ENCODE measurements at regions of chr6 and their contacts with region 1.

Region 1: DNA sequence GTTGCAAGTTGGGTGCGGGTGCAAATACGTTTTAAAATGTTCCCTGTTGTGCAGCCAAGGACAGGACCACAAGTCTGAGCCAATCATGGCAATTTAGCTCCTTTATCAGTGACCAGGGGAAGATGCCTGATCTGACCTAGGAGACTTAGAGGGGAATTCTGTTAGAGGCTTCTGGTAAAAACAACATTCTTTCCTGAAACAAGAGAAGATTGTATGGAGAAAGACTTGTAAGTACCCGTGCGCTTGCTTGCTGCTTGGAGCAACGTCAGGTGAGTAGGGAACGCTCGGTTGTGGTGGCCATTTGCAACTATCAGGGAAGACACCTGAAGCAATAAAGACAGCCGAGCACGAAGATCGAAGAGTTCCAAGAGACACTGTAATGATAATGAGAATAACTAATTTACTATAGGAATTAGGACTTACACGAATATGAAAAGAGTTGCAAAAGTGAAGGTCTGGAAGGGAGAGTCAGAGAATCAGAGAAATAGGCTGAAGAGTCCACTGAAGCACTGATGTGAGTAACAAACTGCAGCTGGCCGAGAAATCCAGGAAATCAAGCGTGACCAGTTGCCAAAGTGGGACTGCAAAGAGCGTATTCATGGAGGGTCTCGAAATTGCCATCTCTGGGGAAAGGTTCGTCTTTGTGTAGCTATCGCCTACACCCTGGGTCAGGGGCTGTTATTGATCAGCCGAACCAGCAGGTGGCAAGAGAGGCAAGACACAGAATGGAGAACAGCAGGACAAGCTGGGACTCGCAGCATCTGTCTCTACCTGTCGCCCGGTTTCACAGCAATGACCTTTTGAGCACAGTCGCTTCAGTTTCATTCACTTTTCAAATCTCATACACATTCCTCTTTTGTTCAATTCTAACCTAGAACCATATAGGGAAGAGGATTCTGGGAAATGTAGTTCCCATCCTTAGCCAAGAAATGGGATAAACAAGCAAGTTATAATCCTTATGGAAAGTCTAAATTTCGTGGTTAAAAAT is 26.1 kb downstream of the LOC128125822 start:
- DNase-seq: peak; percentile 83
- ATAC-seq: peak; percentile 100
- H3K4me3 Mint-ChIP-seq: peak overlapping the region; percentile 73
- H3K27ac Mint-ChIP-seq: no peak overlapping the region
- H3K4me1 Mint-ChIP-seq: no peaks in the 10 kb centered on the region
- H3K27me3 Mint-ChIP-seq: peaks cover 7% of the 10 kb centered on the region
- CTCF ChIP-seq: peak; percentile 92

Region 2: DNA sequence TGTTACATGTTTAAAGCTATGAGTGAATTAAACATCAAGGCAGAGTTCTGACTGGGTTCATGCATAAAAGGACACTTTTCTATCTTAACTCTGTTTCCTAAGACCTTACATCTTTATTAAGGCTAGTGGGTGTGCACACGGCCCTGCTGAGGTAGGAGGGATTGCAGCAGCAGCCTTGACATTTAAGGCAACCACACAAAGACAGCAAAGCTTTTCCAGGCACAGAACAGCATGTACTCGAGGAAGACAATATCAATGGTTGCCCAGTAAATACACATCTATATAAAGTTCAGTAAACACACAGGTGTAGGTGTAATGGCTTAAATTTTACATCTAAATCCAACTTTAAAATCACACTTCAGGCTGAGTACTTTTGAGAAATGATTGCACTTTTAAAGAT is 105.9 kb before region 1 on chr6:
- CTCF ChIA-PET with region 1: no interaction called
- POLR2A ChIA-PET with region 1: no interaction called
- intact Hi-C with region 1: no loop called
- DNase-seq: no peak
- ATAC-seq: no peak
- H3K4me3 Mint-ChIP-seq: no peak overlapping the region
- H3K27ac Mint-ChIP-seq: no peak overlapping the region
- H3K4me1 Mint-ChIP-seq: no peaks in the 10 kb centered on the region
- H3K27me3 Mint-ChIP-seq: peaks cover under 1% of the 10 kb centered on the region
- CTCF ChIP-seq: no peak

Region 3: DNA sequence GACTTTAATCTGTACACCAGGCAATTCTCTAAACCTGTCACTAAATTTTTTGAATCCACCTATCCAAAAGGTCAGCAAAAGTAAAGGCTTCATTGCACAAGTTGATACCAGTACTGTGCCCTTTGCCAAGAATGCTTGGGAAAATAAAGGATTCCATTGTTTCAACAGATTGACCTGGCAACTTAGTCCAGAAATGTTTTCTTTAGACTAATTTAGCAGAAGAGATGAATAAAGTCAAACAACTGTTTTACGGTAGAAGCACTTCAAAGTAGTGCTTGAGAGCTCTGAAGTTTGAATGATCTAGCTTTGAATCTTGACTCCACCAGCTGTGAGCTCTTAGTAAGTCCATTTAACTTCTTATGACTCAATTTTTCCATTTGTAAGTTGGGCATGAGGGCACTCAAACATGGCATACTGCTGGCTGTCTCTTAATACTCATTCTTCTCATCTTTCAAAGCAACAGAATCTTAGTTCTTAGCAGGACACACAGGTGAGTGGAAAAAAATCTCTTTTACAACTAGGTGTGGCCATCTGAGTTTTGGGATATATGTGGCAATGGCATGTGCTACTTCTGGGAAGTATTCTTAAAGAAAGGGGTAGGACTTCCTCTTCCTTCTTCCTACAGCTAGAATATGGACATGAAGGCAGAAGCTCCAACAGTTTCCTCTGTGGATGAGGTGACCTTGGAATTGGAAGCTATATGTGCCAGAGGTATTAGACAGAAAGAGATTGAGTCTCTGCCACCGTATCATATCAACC is 82.0 kb before region 1 on chr6:
- CTCF ChIA-PET with region 1: no interaction called
- POLR2A ChIA-PET with region 1: no interaction called
- intact Hi-C with region 1: no loop called
- DNase-seq: no peak
- ATAC-seq: no peak
- H3K4me3 Mint-ChIP-seq: no peak overlapping the region
- H3K27ac Mint-ChIP-seq: no peak overlapping the region
- H3K4me1 Mint-ChIP-seq: no peaks in the 10 kb centered on the region
- H3K27me3 Mint-ChIP-seq: peaks cover 9% of the 10 kb centered on the region
- CTCF ChIP-seq: no peak

Region 4: DNA sequence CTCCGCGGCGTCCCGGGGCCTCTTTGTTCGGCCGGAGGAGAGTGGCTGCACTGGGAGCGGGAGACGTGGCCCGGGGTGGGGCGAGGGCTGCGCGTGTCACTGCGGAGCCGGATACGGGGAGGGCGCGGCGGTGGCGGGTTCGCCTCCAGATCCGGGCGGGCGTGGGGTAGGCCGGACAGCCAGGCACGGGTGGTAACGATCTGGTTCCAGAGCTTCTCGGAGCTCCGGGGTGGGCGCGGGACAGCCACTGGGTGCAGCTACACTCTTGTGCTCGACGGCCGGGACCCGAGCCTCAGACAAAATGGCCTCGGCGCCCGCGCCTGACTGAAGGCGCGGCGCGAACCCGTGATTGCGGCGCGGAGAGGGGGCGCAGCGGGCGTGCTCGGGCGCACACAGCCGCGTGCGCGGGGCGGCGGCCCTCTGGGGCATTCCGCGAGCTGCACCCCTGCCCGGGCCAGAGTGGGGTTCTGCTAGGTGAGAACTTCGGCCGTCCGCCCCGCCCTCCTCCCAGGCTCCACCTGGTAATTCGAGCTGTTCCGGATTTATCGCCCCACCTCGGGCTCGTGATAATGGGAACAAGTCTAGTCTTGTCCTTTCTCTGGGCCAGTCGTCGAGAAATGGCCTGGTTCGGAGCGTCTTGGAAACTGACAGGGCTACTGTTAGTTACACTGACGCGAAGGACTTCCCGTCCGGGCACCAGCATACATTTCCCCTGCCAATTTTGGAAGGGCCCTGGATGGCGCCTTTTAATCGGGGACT is 25.0 kb before region 1 on chr6:
- CTCF ChIA-PET with region 1: interaction called, 22 read pairs
- POLR2A ChIA-PET with region 1: no interaction called
- intact Hi-C with region 1: no loop called
- DNase-seq: peak; percentile 70
- ATAC-seq: peak; percentile 28
- H3K4me3 Mint-ChIP-seq: peak overlapping the region; percentile 93
- H3K27ac Mint-ChIP-seq: peak overlapping the region; percentile 95
- H3K4me1 Mint-ChIP-seq: peaks cover 22% of the 10 kb centered on the region
- H3K27me3 Mint-ChIP-seq: no peaks in the 10 kb centered on the region
- CTCF ChIP-seq: no peak

Region 5: GRCh38 chr6:63609231-63609630 is 10.9 kb after region 1 on chr6:
- CTCF ChIA-PET with region 1: interaction called, 19 read pairs
- POLR2A ChIA-PET with region 1: no interaction called
- intact Hi-C with region 1: no loop called
- DNase-seq: no peak
- ATAC-seq: no peak
- H3K4me3 Mint-ChIP-seq: no peak overlapping the region
- H3K27ac Mint-ChIP-seq: no peak overlapping the region
- H3K4me1 Mint-ChIP-seq: no peaks in the 10 kb centered on the region
- H3K27me3 Mint-ChIP-seq: peaks cover 1% of the 10 kb centered on the region
- CTCF ChIP-seq: no peak

Region 6: GRCh38 chr6:63635588-63636517 is 37.5 kb after region 1 on chr6 and contains the start of gene PHF3:
- CTCF ChIA-PET with region 1: interaction called, 21 read pairs
- POLR2A ChIA-PET with region 1: no interaction called
- intact Hi-C with region 1: no loop called
- DNase-seq: peak; percentile 91
- ATAC-seq: peak; percentile 94
- H3K4me3 Mint-ChIP-seq: peak within 1 kb of the TSS; percentile 88
- H3K27ac Mint-ChIP-seq: peak within 1 kb of the TSS; percentile 93
- H3K4me1 Mint-ChIP-seq: peaks cover 38% of the 10 kb centered on the region
- H3K27me3 Mint-ChIP-seq: no peaks in the 10 kb centered on the region
- CTCF ChIP-seq: peak; percentile 11
- total RNA-seq, gene PHF3: 45.6 to 50.3 TPM

Region 7: GRCh38 chr6:63724721-63725120 is 126.4 kb after region 1 on chr6:
- CTCF ChIA-PET with region 1: interaction called, 10 read pairs
- POLR2A ChIA-PET with region 1: no interaction called
- intact Hi-C with region 1: no loop called
- DNase-seq: no peak
- ATAC-seq: no peak
- H3K4me3 Mint-ChIP-seq: no peak overlapping the region
- H3K27ac Mint-ChIP-seq: no peak overlapping the region
- H3K4me1 Mint-ChIP-seq: peaks cover 1% of the 10 kb centered on the region
- H3K27me3 Mint-ChIP-seq: no peaks in the 10 kb centered on the region
- CTCF ChIP-seq: no peak